Activated naive CD4-positive, alpha-beta T cell treated with anti-CD3 and anti-CD28 coated beads for 36 hours (primary cell): ENCODE measurements at regions of chr19 and their contacts with region 1.

Region 1: GRCh38 chr19:18919086-18919899 is at the starts of genes COPE and DDX49:
- DNase-seq: peak; percentile 99
- H3K4me3 Mint-ChIP-seq: peak within 1 kb of the TSS; percentile 94
- H3K27ac Mint-ChIP-seq: peak within 1 kb of the TSS; percentile 88
- H3K4me1 Mint-ChIP-seq: peaks cover 46% of the 10 kb centered on the region
- H3K27me3 Mint-ChIP-seq: no peaks in the 10 kb centered on the region
- total RNA-seq, gene COPE: 199 to 200 TPM
- total RNA-seq, gene DDX49: 48.3 to 50.1 TPM

Region 2: GRCh38 chr19:18091217-18091608 is 828.1 kb before region 1 on chr19:
- CTCF ChIA-PET with region 1: no interaction called
- intact Hi-C with region 1: loop called (anchors 5 kb)
- DNase-seq: peak; percentile 94
- H3K4me3 Mint-ChIP-seq: peak overlapping the region; percentile 61
- H3K27ac Mint-ChIP-seq: peak overlapping the region; percentile 97
- H3K4me1 Mint-ChIP-seq: peaks cover 59% of the 10 kb centered on the region
- H3K27me3 Mint-ChIP-seq: no peaks in the 10 kb centered on the region

Region 3: GRCh38 chr19:18542936-18543815 is 376.1 kb before region 1 on chr19 and contains the start of gene FKBP8:
- CTCF ChIA-PET with region 1: no interaction called
- intact Hi-C with region 1: loop called (anchors 1 kb)
- DNase-seq: peak; percentile 97
- H3K4me3 Mint-ChIP-seq: peak within 1 kb of the TSS; percentile 88
- H3K27ac Mint-ChIP-seq: peak within 1 kb of the TSS; percentile 95
- H3K4me1 Mint-ChIP-seq: peaks cover 21% of the 10 kb centered on the region
- H3K27me3 Mint-ChIP-seq: no peaks in the 10 kb centered on the region
- total RNA-seq, gene FKBP8: 161 to 163 TPM

Region 4: GRCh38 chr19:18588611-18589379 is 330.5 kb before region 1 on chr19 and contains the start of gene REX1BD:
- CTCF ChIA-PET with region 1: interaction called, 3 read pairs
- intact Hi-C with region 1: loop called (anchors 1 kb)
- DNase-seq: peak; percentile 83
- H3K4me3 Mint-ChIP-seq: peak within 1 kb of the TSS; percentile 87
- H3K27ac Mint-ChIP-seq: peak within 1 kb of the TSS; percentile 87
- H3K4me1 Mint-ChIP-seq: peaks cover 27% of the 10 kb centered on the region
- H3K27me3 Mint-ChIP-seq: no peaks in the 10 kb centered on the region
- total RNA-seq, gene REX1BD: 62.9 to 68.5 TPM

Region 5: GRCh38 chr19:18932216-18932841 is 13.0 kb after region 1 on chr19:
- CTCF ChIA-PET with region 1: interaction called, 3 read pairs
- intact Hi-C with region 1: loop called (anchors 1 kb)
- DNase-seq: peak; percentile 83
- H3K4me3 Mint-ChIP-seq: peak overlapping the region; percentile 65
- H3K27ac Mint-ChIP-seq: no peak overlapping the region
- H3K4me1 Mint-ChIP-seq: peaks cover 5% of the 10 kb centered on the region
- H3K27me3 Mint-ChIP-seq: peaks cover 10% of the 10 kb centered on the region

Region 6: GRCh38 chr19:19063183-19064097 is 144.1 kb after region 1 on chr19 and contains the start of gene SLC25A42:
- CTCF ChIA-PET with region 1: no interaction called
- intact Hi-C with region 1: loop called (anchors 1 kb)
- DNase-seq: peak; percentile 99
- H3K4me3 Mint-ChIP-seq: peak within 1 kb of the TSS; percentile 85
- H3K27ac Mint-ChIP-seq: peak within 1 kb of the TSS; percentile 83
- H3K4me1 Mint-ChIP-seq: peaks cover 41% of the 10 kb centered on the region
- H3K27me3 Mint-ChIP-seq: no peaks in the 10 kb centered on the region
- total RNA-seq, gene SLC25A42: 6.7 to 8.5 TPM

Region 7: DNA sequence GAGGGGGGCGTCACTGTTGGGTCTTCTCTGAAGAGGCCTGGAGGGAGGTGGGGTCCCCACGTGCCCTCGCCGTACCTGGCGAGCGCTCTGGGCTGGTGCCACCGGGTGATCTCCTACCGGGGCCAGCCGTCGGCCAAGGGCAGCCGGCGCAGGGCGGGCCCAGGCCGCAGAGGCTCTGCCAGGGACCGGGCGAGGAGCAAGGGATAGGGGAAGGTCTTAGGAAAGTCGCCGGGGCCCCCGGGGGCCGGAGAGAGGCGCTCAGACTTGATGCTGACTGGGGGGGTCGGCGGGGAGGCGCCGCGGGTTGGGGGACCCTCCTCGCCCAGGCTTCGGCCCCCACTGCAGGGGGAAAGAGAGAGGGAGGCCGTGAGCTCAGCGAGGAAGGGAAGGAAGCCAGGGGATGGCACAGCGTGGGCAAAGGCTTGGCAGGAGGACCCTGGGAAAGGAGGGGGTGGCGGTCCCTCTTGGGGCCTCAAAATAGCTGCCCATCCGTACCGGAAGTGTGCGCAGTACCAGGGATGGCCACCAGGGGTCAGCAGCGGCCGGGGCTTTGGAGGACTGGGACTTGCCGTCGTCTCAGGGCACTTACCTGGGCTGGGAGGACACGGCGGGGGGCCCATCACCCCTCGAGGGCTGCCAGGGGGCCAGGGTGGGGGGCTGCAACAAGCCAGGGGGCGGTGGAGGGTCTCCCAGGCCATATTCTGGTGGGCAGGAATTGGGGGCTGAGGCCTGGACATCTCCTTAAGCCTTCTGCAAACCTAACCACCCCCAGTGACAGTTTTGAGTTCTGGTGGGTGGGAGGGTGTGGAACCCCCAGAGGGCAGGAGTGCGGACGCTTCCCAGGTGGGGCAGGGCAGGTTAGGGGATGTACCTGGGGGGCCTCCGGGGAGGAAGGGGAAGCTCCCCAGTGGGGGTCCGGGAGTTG is 226.7 kb after region 1 on chr19:
- CTCF ChIA-PET with region 1: no interaction called
- intact Hi-C with region 1: no loop called
- DNase-seq: peak; percentile 92
- H3K4me3 Mint-ChIP-seq: no peak overlapping the region
- H3K27ac Mint-ChIP-seq: no peak overlapping the region
- H3K4me1 Mint-ChIP-seq: no peaks in the 10 kb centered on the region
- H3K27me3 Mint-ChIP-seq: no peaks in the 10 kb centered on the region

Region 8: GRCh38 chr19:19320362-19321142 is 401.3 kb after region 1 on chr19 and contains the starts of genes MAU2 and SUGP1:
- CTCF ChIA-PET with region 1: no interaction called
- intact Hi-C with region 1: loop called (anchors 1 kb)
- DNase-seq: peak; percentile 94
- H3K4me3 Mint-ChIP-seq: peak within 1 kb of the TSS; percentile 93
- H3K27ac Mint-ChIP-seq: peak within 1 kb of the TSS; percentile 99
- H3K4me1 Mint-ChIP-seq: peaks cover 47% of the 10 kb centered on the region
- H3K27me3 Mint-ChIP-seq: no peaks in the 10 kb centered on the region
- total RNA-seq, gene MAU2: 38.6 to 42.5 TPM
- total RNA-seq, gene SUGP1: 31.7 to 32.4 TPM